Endothelial cell of umbilical vein (primary cell): ENCODE measurements at regions of chr3 and their contacts with region 1.

Region 1: GRCh38 chr3:184017672-184018423 is at the start of gene ABCC5:
- DNase-seq: peak; percentile 93
- H3K4me3 ChIP-seq: peak within 1 kb of the TSS; percentile 21 to 59 (median 48)
- H3K27ac ChIP-seq: no peak within 1 kb of the TSS
- H3K4me1 ChIP-seq: peaks cover 7% of the 10 kb centered on the region
- H3K27me3 ChIP-seq: peaks cover 3 to 4% of the 10 kb centered on the region in 2 experiments
- CTCF ChIP-seq: no peak
- POLR2A ChIP-seq: peak; percentile 79
- total RNA-seq, gene ABCC5: 24.6 and 25.4 TPM in 2 replicates

Region 2: DNA sequence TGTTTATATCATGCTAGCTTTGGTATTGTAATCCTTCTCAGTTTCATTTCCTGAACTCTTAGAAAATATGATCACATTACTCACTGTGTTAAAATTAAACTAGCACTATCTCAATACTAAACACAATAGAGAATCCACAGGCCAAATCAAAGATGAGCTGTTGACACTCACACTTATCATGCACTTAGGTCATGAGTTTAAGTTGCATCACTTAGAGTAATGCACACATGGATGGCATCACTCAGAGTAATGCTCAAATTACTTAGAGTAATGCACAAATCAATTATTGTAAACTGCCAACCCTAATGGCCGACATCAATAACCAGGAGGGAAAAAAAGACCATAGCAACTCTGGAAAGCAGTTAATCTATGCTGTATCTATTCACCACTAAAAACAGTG is 549.4 kb before region 1 on chr3:
- CTCF ChIA-PET with region 1: no interaction called
- POLR2A ChIA-PET with region 1: no interaction called
- dilution Hi-C with region 1: no loop called
- intact Hi-C with region 1: loop called (anchors 2 kb)
- DNase-seq: no peak
- H3K4me3 ChIP-seq: no peak overlapping the region
- H3K27ac ChIP-seq: no peak overlapping the region
- H3K4me1 ChIP-seq: peaks cover 6% of the 10 kb centered on the region
- H3K27me3 ChIP-seq: no peaks in the 10 kb centered on the region
- CTCF ChIP-seq: no peak
- POLR2A ChIP-seq: no peak

Region 3: GRCh38 chr3:183904833-183905780 is 112.7 kb before region 1 on chr3:
- CTCF ChIA-PET with region 1: interaction called, 10 read pairs
- POLR2A ChIA-PET with region 1: no interaction called
- dilution Hi-C with region 1: no loop called
- intact Hi-C with region 1: no loop called
- DNase-seq: no peak
- H3K4me3 ChIP-seq: no peak overlapping the region
- H3K27ac ChIP-seq: no peak overlapping the region
- H3K4me1 ChIP-seq: no peaks in the 10 kb centered on the region
- H3K27me3 ChIP-seq: no peaks in the 10 kb centered on the region
- CTCF ChIP-seq: no peak
- POLR2A ChIP-seq: no peak

Region 4: DNA sequence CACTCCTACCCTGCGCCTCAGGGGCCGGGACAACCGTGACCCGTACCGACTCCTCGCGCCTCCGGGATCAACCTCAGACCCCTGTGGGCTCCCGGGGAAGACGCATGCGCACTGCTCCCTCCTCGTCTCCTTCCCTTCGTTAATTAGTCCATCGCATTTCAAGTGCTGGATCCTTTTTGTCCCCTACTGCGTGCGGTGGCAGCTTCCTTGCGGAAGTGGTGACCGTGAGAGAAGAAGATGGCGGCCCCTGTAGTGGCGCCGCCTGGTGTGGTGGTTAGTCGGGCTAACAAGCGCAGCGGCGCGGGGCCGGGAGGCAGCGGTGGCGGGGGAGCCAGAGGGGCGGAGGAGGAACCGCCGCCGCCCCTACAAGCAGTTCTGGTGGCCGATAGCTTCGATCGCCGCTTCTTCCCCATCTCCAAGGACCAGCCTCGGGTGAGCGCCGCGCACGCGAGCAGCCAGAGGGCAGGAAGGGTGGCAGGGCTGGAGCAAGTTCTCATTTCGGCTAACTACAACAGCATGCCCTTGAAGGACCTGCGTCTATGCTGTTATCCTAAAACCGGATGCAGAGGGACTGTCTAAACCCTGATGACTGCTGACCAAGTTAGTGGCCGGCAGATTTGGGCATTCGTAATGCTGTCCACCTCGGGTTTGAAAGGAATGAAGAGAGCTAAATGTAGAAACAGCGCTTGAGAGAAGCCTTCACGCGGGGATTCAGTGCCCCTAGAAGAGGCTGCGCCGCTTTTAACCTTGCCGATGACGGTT is 117.5 kb after region 1 on chr3 and contains the start of gene EIF2B5:
- CTCF ChIA-PET with region 1: no interaction called
- POLR2A ChIA-PET with region 1: no interaction called
- dilution Hi-C with region 1: no loop called
- intact Hi-C with region 1: loop called (anchors 2 kb)
- DNase-seq: peak; percentile 96
- H3K4me3 ChIP-seq: peak within 1 kb of the TSS; percentile 67 to 92 (median 90)
- H3K27ac ChIP-seq: peak within 1 kb of the TSS; percentile 56
- H3K4me1 ChIP-seq: peaks cover 27% of the 10 kb centered on the region
- H3K27me3 ChIP-seq: no peaks in the 10 kb centered on the region
- CTCF ChIP-seq: peak; percentile 26 to 41
- POLR2A ChIP-seq: peak; percentile 77
- total RNA-seq, gene EIF2B5: 38.8 and 44.7 TPM in 2 replicates

Region 5: DNA sequence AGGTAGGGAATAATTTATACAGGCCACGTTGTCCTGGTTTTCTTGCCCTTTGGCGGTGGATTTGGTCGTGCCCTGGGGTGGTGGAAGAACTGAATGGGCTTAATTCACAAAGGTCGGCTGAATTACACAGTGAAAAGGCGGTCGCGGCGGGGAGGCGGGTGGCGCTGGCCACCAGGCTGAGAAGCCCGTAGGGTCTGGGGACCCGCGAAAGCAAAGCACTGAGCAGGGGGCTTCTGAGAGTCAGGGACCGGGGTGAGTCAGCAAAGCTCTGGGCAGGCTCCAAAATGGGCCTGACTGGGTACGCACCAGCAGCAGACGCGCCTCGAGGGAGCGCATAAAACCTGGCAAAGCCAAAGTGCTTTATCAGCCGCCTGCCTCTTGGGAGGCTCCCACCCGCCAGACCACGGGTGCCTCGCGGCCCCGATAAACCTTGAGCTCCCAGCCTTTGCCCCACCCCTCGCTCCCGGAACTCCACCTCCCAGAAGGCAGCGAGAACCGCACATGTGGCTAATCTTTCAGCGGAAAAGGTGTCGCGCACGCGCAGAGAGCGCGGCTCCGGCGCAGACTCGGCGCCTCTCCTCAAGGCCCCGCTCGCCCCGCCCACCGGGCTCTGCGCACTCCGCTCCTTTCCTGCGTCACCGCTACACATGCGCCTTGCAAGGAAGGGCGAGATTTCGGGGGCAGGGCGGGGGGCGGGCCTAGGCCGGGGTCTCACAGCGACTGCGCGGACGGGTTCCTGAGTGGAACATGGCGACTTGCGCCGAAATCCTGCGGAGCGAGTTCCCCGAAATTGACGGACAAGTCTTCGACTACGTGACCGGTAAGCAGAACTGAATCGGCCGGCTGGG is 167.8 kb after region 1 on chr3 and contains the start of gene ABCF3:
- CTCF ChIA-PET with region 1: no interaction called
- POLR2A ChIA-PET with region 1: no interaction called
- dilution Hi-C with region 1: no loop called
- intact Hi-C with region 1: loop called (anchors 2 kb)
- DNase-seq: peak; percentile 99
- H3K4me3 ChIP-seq: peak within 1 kb of the TSS; percentile 5 to 92 (median 54)
- H3K27ac ChIP-seq: peak within 1 kb of the TSS; percentile 64
- H3K4me1 ChIP-seq: peaks cover 14% of the 10 kb centered on the region
- H3K27me3 ChIP-seq: no peaks in the 10 kb centered on the region
- CTCF ChIP-seq: no peak
- POLR2A ChIP-seq: peak; percentile 87
- total RNA-seq, gene ABCF3: 65.6 and 68.8 TPM in 2 replicates

Region 6: GRCh38 chr3:184289426-184289938 is 271.6 kb after region 1 on chr3:
- CTCF ChIA-PET with region 1: no interaction called
- POLR2A ChIA-PET with region 1: no interaction called
- dilution Hi-C with region 1: no loop called
- intact Hi-C with region 1: loop called (anchors 1 kb)
- DNase-seq: peak; percentile 52
- H3K4me3 ChIP-seq: no peak overlapping the region
- H3K27ac ChIP-seq: no peak overlapping the region
- H3K4me1 ChIP-seq: no peaks in the 10 kb centered on the region
- H3K27me3 ChIP-seq: peaks cover 0 to 3% of the 10 kb centered on the region in 2 experiments
- CTCF ChIP-seq: peak; percentile 67
- POLR2A ChIP-seq: no peak